Upper lobe of right lung (tissue), 1 donor: ENCODE measurements at regions of chr6 and their contacts with region 1.

Region 1: GRCh38 chr6:34890533-34890925 is 1.5 kb downstream of the ANKS1A start:
- DNase-seq: no peak
- ATAC-seq: no peak
- H3K4me3 ChIP-seq: peak overlapping the region; percentile 76
- H3K27ac ChIP-seq: peak overlapping the region; percentile 86
- H3K4me1 ChIP-seq: peaks cover 25% of the 10 kb centered on the region
- H3K27me3 ChIP-seq: no peaks in the 10 kb centered on the region
- CTCF ChIP-seq: no peak

Region 2: GRCh38 chr6:34964564-34964963 is 74.0 kb after region 1 on chr6:
- intact Hi-C with region 1: loop called (anchors 10 kb)
- DNase-seq: no peak
- ATAC-seq: no peak
- H3K4me3 ChIP-seq: no peak overlapping the region
- H3K27ac ChIP-seq: no peak overlapping the region
- H3K4me1 ChIP-seq: peaks cover 12% of the 10 kb centered on the region
- H3K27me3 ChIP-seq: no peaks in the 10 kb centered on the region
- CTCF ChIP-seq: no peak

Region 3: DNA sequence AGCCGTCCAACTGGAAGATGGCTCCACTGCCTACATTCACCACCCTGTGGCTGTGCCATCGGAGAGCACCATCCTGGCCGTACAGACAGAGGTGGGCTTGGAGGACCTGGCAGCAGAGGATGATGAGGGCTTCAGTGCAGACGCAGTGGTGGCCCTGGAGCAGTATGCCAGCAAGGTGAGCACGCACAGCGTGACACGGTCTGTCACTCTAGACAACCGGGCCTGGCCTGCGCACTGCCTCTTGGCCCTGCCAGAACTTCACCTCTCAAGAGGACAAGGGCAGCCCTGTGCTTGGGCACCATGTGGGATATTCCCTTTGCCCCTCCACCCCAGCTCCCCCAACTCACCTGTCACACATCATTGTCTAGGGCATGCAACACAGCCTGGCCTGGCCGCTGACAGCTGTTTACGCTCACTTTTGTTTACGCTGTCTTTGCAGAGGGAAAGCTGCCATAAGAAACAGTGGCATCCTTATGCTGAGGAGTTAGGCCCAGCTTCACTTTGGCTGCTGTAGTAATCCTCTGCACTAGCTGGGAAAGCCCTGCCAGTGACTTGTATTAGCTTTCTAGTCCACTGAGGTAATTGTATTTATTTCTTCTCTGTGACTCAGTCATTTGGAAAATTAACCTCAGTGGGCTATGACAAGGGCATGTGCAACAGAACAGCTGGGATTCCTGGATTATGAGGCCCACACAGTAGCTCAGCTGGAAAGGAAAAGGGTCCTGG is 397.3 kb after region 1 on chr6:
- intact Hi-C with region 1: no loop called
- DNase-seq: no peak
- ATAC-seq: no peak
- H3K4me3 ChIP-seq: no peak overlapping the region
- H3K27ac ChIP-seq: no peak overlapping the region
- H3K4me1 ChIP-seq: no peaks in the 10 kb centered on the region
- H3K27me3 ChIP-seq: no peaks in the 10 kb centered on the region
- CTCF ChIP-seq: no peak

Region 4: GRCh38 chr6:35425284-35425683 is 534.8 kb after region 1 on chr6:
- intact Hi-C with region 1: no loop called
- DNase-seq: no peak
- ATAC-seq: no peak
- H3K4me3 ChIP-seq: no peak overlapping the region
- H3K27ac ChIP-seq: no peak overlapping the region
- H3K4me1 ChIP-seq: peaks cover 4% of the 10 kb centered on the region
- H3K27me3 ChIP-seq: no peaks in the 10 kb centered on the region
- CTCF ChIP-seq: no peak